ENCODE measurements at regions of chr12 and their contacts with region 1.

Region 1: DNA sequence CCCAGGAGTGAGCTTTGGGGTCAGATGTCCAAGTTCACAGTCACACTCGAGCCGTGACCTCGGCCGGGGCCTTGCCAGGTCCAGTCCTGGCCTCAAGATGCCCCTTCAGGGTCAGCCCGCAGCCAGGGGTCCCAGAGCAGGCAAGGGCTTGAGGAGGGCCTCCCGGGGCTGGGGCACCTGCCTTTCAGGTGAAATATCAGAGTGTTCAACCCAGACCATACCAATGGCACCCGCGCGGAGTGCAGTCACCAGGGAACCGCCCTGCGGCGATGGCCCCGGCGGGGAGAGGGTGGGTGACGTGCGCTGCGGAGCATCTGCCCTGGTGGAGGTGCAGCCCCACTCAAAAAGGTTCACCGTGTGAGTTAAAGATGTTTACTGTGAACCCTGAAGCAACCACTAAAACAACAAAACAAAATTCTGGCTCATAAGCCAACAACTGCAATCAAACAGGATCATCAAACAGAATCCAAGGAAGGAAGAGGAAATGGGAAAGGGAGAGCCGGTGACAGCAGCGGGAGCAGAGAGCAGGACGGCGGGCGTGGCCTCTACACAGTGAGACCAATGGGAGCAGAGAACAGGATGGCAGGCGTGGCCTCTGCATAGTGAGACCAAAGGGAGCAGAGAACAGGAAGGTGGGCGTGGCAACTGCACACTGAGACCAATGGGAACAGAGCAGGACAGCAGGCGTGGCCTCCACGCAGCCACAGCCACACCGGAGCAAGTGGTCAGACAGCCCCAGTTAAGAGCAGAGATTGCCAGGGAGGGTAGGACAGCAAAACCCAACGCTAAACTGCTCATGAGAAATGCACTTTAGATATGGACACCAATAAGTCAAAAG is 16.6 kb downstream of the LRCOL1 start:
- DNase-seq: peak; percentile 94 to 98
- H3K4me3 ChIP-seq: peak overlapping the region; percentile 25
- H3K4me3 Mint-ChIP-seq: peak overlapping the region; percentile 67
- H3K27ac Mint-ChIP-seq: no peak overlapping the region
- H3K4me1 ChIP-seq: peaks cover 4% of the 10 kb centered on the region; the same call in 1 of the 2 replicates
- H3K4me1 Mint-ChIP-seq: peaks cover 20% of the 10 kb centered on the region
- H3K27me3 ChIP-seq: no peaks in the 10 kb centered on the region
- H3K27me3 Mint-ChIP-seq: peaks cover 10% of the 10 kb centered on the region
- CTCF ChIP-seq: no peak

Region 2: GRCh38 chr12:132106921-132107320 is 486.8 kb before region 1 on chr12:
- CTCF ChIA-PET with region 1: no interaction called
- POLR2A ChIA-PET with region 1: no interaction called
- intact Hi-C with region 1: no loop called
- DNase-seq: no peak
- H3K4me3 ChIP-seq: no peak overlapping the region
- H3K4me3 Mint-ChIP-seq: no peak overlapping the region
- H3K27ac Mint-ChIP-seq: no peak overlapping the region
- H3K4me1 ChIP-seq: no peaks in the 10 kb centered on the region
- H3K4me1 Mint-ChIP-seq: no peaks in the 10 kb centered on the region
- H3K27me3 ChIP-seq: no peaks in the 10 kb centered on the region
- H3K27me3 Mint-ChIP-seq: no peaks in the 10 kb centered on the region
- CTCF ChIP-seq: no peak

Region 3: GRCh38 chr12:132560614-132561426 is 32.9 kb before region 1 on chr12:
- CTCF ChIA-PET with region 1: no interaction called
- POLR2A ChIA-PET with region 1: interaction called, 3 read pairs
- intact Hi-C with region 1: loop called (anchors 1 kb)
- DNase-seq: peak; percentile 84 to 88
- H3K4me3 ChIP-seq: peak overlapping the region; percentile 98
- H3K4me3 Mint-ChIP-seq: peak overlapping the region; percentile 80
- H3K27ac Mint-ChIP-seq: peak overlapping the region; percentile 55
- H3K4me1 ChIP-seq: no peaks in the 10 kb centered on the region
- H3K4me1 Mint-ChIP-seq: peaks cover 6% of the 10 kb centered on the region
- H3K27me3 ChIP-seq: no peaks in the 10 kb centered on the region
- H3K27me3 Mint-ChIP-seq: no peaks in the 10 kb centered on the region
- CTCF ChIP-seq: peak; percentile 82 to 93

Measured in Caco-2 (cell line).